ENCODE measurements at regions of chr1 and their contacts with region 1.

Region 1: DNA sequence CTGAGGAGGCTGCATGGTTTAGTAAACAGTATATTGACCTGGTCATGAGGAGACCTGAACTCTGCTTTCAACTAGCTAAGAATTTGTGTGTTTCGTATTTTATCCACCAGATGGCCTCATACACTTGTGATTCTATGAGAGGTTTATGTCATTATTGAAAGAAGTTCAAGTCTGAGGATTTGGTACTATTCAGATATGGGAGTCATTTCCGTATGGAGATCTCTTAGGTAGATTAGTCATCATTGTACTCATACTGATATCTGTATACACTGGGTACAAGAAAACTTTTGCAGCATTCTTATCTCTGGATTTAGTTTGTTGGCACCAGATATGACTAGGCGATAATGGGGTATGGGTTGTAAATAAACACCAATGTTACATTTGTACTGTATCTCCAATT is 26.6 kb downstream of the ATF6 start:
- DNase-seq: peak; percentile 93
- ATAC-seq: peak; percentile 92
- H3K4me3 ChIP-seq: no peak overlapping the region
- H3K27ac ChIP-seq: no peak overlapping the region
- H3K4me1 ChIP-seq: peaks cover 4% of the 10 kb centered on the region; the same call in 1 of the 2 replicates
- H3K27me3 ChIP-seq: no peaks in the 10 kb centered on the region
- CTCF ChIP-seq: peak; percentile 76
- POLR2A ChIP-seq: no peak
- RAD21 ChIP-seq: peak; percentile 83

Region 2: GRCh38 chr1:161706482-161707347 is 86.0 kb before region 1 on chr1 and contains the start of gene FCRLA:
- CTCF ChIA-PET with region 1: no interaction called
- POLR2A ChIA-PET with region 1: no interaction called
- dilution Hi-C with region 1: no loop called
- in situ Hi-C with region 1: no loop called
- intact Hi-C with region 1: no loop called
- DNase-seq: peak; percentile 97
- ATAC-seq: peak; percentile 93
- H3K4me3 ChIP-seq: no peak within 1 kb of the TSS
- H3K27ac ChIP-seq: peak within 1 kb of the TSS; percentile 24
- H3K4me1 ChIP-seq: peaks cover 11% of the 10 kb centered on the region
- H3K27me3 ChIP-seq: no peaks in the 10 kb centered on the region
- CTCF ChIP-seq: no peak
- POLR2A ChIP-seq: no peak
- RAD21 ChIP-seq: 0 out of 2 replicates have a peak, but pooled peaks have one; percentile 3
- total RNA-seq, gene FCRLA: 0.28 and 0.36 TPM in 2 replicates

Region 3: DNA sequence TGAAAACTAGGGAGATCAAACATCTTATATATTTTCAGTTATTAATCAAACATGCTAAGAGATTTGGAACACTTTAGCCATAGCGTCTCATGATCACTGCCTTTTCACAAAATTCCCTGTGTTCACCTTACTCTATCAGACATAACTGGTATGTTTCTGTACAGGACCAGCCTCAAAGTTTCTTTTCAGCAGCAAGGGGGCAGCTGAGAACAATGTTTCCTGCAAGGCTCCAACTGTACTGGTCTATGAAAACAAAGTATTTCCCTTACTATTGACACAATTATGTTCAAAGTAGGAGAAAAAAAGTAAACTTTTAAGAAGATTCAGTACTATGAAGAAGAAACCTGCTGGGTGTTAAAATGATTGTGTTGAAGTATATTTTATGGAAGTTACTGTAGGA is 71.8 kb after region 1 on chr1:
- CTCF ChIA-PET with region 1: interaction called, 9 read pairs
- POLR2A ChIA-PET with region 1: no interaction called
- dilution Hi-C with region 1: no loop called
- in situ Hi-C with region 1: no loop called
- intact Hi-C with region 1: loop called (anchors 5 kb)
- DNase-seq: peak; percentile 51
- ATAC-seq: peak; percentile 84
- H3K4me3 ChIP-seq: no peak overlapping the region
- H3K27ac ChIP-seq: no peak overlapping the region
- H3K4me1 ChIP-seq: peaks cover 5% of the 10 kb centered on the region; the same call in 1 of the 2 replicates
- H3K27me3 ChIP-seq: no peaks in the 10 kb centered on the region
- CTCF ChIP-seq: peak; percentile 56
- POLR2A ChIP-seq: no peak
- RAD21 ChIP-seq: peak; percentile 56

Region 4: DNA sequence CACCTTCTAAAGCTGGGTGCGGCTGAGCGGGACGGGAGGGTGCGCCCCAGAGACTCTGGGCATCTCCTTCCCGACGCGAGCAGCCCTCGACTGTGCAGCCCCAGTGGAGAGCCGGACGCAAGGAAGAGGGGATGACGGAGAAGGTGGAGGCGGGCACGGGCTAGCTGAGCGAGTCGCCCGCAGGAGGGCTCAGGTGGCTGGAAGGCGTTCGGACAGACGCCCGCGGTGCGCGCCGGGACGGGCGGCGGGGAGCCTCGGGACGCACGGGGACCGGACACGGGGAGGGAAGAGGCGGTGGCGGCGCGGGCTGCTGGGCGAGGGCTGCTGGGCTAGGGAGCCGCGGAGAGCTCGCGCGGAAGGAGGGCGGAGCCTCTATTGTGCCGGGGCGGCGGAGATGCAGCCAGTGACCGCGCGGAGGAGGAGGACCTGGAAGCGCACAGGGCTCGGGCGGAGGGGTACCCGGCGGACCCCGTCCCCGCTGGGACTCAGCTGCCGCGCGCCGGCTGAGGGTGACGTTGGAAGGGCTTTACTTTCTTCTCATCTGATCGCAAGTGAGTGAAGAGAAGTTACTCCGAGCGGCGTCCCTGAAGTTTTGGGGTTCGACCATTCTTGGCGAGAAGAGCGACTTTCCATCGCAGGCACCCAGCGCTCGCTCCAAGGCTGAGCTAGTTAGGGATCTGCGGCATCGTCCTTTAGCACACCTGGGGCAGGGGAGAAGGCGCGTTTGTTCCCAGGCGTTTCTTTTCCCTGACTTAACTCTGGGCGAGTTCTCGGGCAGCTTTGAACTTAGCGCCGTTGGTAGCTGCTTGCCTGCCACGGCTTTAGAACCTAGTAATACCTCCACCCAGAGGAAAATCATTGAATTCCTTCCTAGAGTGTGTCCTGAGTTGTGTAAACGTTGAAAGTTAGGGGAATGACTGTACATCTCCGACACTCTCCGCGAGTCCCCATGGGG is 231.1 kb after region 1 on chr1 and contains the start of gene OLFML2B:
- CTCF ChIA-PET with region 1: interaction called, 16 read pairs
- POLR2A ChIA-PET with region 1: no interaction called
- dilution Hi-C with region 1: no loop called
- in situ Hi-C with region 1: no loop called
- intact Hi-C with region 1: loop called (anchors 1 kb)
- DNase-seq: peak; percentile 76
- ATAC-seq: peak; percentile 93
- H3K4me3 ChIP-seq: peak within 1 kb of the TSS; percentile 68
- H3K27ac ChIP-seq: no peak within 1 kb of the TSS; the same call in 1 of the 2 replicates
- H3K4me1 ChIP-seq: peaks cover 5% of the 10 kb centered on the region; the same call in 1 of the 2 replicates
- H3K27me3 ChIP-seq: peaks cover 6% of the 10 kb centered on the region
- CTCF ChIP-seq: peak; percentile 52
- POLR2A ChIP-seq: no peak
- RAD21 ChIP-seq: peak; percentile 66
- total RNA-seq, gene OLFML2B: 0.36 and 0.56 TPM in 2 replicates

Region 5: GRCh38 chr1:162040681-162041080 is 247.9 kb after region 1 on chr1:
- CTCF ChIA-PET with region 1: interaction called, 76 read pairs
- POLR2A ChIA-PET with region 1: interaction called, 7 read pairs
- dilution Hi-C with region 1: no loop called
- in situ Hi-C with region 1: loop called (anchors 5 kb)
- intact Hi-C with region 1: loop called (anchors 1 kb)
- DNase-seq: peak; percentile 50
- ATAC-seq: peak; percentile 62
- H3K4me3 ChIP-seq: no peak overlapping the region
- H3K27ac ChIP-seq: no peak overlapping the region
- H3K4me1 ChIP-seq: no peaks in the 10 kb centered on the region
- H3K27me3 ChIP-seq: peaks cover 10% of the 10 kb centered on the region
- CTCF ChIP-seq: peak; percentile 52; the same call in 1 of the 2 replicates
- POLR2A ChIP-seq: no peak
- RAD21 ChIP-seq: peak; percentile 36

Region 6: DNA sequence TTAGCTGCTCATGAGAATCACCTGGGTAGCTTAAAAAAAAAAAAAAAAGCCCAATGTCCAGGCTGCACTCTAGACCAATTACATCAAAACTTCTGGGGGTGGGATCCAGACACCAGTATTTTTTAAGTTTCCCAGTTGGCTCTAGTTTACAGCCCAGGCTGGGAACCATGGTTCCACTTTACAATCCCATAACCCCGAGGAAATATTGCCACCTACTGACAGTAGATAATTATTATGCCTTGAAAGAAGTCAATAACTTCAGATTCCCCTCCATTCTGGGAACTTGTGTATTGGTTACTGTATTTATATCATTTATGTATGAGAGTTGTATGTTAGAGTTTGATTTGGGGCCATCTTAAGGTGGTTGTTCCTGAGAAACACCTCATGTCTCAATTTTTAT is 483.8 kb after region 1 on chr1:
- CTCF ChIA-PET with region 1: no interaction called
- POLR2A ChIA-PET with region 1: no interaction called
- dilution Hi-C with region 1: no loop called
- in situ Hi-C with region 1: no loop called
- intact Hi-C with region 1: loop called (anchors 2 kb)
- DNase-seq: peak; percentile 25
- ATAC-seq: peak; percentile 82
- H3K4me3 ChIP-seq: no peak overlapping the region
- H3K27ac ChIP-seq: no peak overlapping the region
- H3K4me1 ChIP-seq: no peaks in the 10 kb centered on the region
- H3K27me3 ChIP-seq: peaks cover 10% of the 10 kb centered on the region
- CTCF ChIP-seq: peak; percentile 55
- POLR2A ChIP-seq: no peak
- RAD21 ChIP-seq: peak; percentile 56

Measured in IMR-90 (cell line).